MCF 10A (cell line): ENCODE measurements at regions of chr12 and their contacts with region 1.

Region 1: DNA sequence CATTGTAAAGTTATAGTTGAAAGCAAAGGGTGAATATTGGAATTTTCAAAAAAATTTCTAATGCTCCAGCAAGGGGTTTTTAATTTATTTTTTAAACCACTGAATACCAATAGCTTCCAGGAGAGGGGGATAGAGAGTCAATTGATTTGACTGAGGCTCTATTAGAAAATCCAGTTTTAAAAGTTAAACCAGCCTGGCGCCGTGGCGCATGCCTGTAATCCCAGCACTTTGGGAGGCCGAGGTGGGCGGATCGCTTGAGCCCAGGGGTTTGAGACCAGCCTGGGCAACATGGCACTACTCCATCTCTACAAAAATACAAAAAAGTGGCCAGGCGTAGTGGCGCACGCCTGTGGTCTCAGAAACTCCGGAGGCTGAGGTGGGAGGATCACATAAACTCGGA is 150.1 kb downstream of the SLC38A4 start:
- DNase-seq: peak; percentile 72
- H3K4me3 Mint-ChIP-seq: no peak overlapping the region
- H3K27ac Mint-ChIP-seq: peak overlapping the region; percentile 98
- H3K4me1 Mint-ChIP-seq: peaks cover 43% of the 10 kb centered on the region
- H3K27me3 Mint-ChIP-seq: no peaks in the 10 kb centered on the region
- CTCF ChIP-seq: peak; percentile 69

Region 2: GRCh38 chr12:45990468-45991283 is 685.1 kb before region 1 on chr12 and contains the start of gene SCAF11:
- CTCF ChIA-PET with region 1: interaction called, 5 read pairs
- POLR2A ChIA-PET with region 1: interaction called, 18 read pairs
- intact Hi-C with region 1: loop called (anchors 5 kb)
- DNase-seq: peak; percentile 99
- H3K4me3 Mint-ChIP-seq: peak within 1 kb of the TSS; percentile 91
- H3K27ac Mint-ChIP-seq: peak within 1 kb of the TSS; percentile 93
- H3K4me1 Mint-ChIP-seq: peaks cover 31% of the 10 kb centered on the region
- H3K27me3 Mint-ChIP-seq: no peaks in the 10 kb centered on the region
- CTCF ChIP-seq: peak; percentile 85
- total RNA-seq, gene SCAF11: 106 and 107 TPM in 2 replicates

Region 3: GRCh38 chr12:46160101-46160980 is 515.4 kb before region 1 on chr12:
- CTCF ChIA-PET with region 1: no interaction called
- POLR2A ChIA-PET with region 1: interaction called, 11 read pairs
- intact Hi-C with region 1: no loop called
- DNase-seq: peak; percentile 93
- H3K4me3 Mint-ChIP-seq: peak overlapping the region; percentile 51
- H3K27ac Mint-ChIP-seq: peak overlapping the region; percentile 77
- H3K4me1 Mint-ChIP-seq: peaks cover 18% of the 10 kb centered on the region
- H3K27me3 Mint-ChIP-seq: no peaks in the 10 kb centered on the region
- CTCF ChIP-seq: no peak

Region 4: DNA sequence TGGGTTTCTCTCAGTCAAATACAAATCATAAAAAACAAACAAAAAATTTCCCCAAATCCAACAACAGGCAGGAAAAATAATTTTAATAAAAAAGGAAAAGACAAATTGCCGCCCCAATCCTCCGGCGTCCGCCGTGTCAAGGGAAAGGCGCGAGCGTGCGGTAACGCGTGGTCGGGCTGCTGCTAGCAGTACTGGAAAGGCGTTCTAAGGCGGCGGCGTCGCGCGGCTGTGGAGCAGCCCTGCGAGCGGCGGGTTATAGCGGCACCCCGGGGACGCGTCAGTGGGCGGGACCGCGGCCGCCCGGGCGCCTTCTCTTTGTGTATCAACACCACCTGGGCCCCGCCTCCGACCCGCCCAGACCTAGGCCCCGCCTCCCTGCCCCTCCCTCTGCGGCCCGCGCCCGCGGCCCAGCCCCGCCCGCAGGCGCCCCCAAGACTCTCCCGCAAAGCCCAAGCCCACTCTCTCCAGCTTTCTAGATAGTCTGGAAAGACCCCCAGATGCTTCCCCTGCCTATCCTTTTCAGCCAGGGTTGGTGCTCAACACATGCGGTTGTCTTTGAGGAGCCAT is 303.1 kb before region 1 on chr12 and contains the start of gene SLC38A2:
- CTCF ChIA-PET with region 1: interaction called, 13 read pairs
- POLR2A ChIA-PET with region 1: interaction called, 497 read pairs
- intact Hi-C with region 1: loop called (anchors 1 kb)
- DNase-seq: peak; percentile 92
- H3K4me3 Mint-ChIP-seq: peak within 1 kb of the TSS; percentile 93
- H3K27ac Mint-ChIP-seq: peak within 1 kb of the TSS; percentile 98
- H3K4me1 Mint-ChIP-seq: peaks cover 12% of the 10 kb centered on the region
- H3K27me3 Mint-ChIP-seq: no peaks in the 10 kb centered on the region
- CTCF ChIP-seq: no peak
- total RNA-seq, gene SLC38A2: 817 and 1,070 TPM in 2 replicates

Region 5: DNA sequence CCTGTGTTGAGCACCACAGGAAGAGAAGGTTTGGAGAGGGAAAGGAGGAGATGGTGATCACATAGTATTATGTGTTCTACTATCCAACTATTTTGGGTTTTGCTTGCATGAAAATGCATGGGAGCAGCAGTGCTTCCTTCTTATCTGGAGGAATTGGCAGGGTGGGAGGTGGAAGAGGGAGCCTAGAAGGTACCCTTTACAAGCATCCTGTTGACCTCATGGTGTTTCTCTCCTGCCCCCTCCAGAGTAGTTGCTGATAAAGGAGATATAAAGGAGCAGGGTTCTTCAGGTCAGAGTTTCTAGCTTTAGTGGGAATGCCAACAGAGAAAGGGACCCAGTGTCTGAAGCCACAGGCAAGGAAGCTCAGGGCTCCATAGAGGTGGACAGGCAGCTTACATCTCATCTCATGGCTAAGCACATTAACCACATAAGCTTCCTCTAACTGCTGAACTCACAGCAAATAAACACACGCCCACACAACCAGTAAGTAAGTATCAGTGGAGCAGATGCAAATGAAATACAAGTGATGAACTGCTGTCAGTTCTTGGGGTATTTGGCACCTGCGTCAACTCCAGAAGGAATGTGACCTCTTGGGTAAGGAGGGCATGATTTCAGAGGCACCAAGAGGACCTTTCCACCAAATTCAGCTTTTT is 129.0 kb before region 1 on chr12:
- CTCF ChIA-PET with region 1: no interaction called
- POLR2A ChIA-PET with region 1: interaction called, 11 read pairs
- intact Hi-C with region 1: no loop called
- DNase-seq: no peak
- H3K4me3 Mint-ChIP-seq: no peak overlapping the region
- H3K27ac Mint-ChIP-seq: peak overlapping the region; percentile 98
- H3K4me1 Mint-ChIP-seq: peaks cover 55% of the 10 kb centered on the region
- H3K27me3 Mint-ChIP-seq: no peaks in the 10 kb centered on the region
- CTCF ChIP-seq: no peak

Region 6: DNA sequence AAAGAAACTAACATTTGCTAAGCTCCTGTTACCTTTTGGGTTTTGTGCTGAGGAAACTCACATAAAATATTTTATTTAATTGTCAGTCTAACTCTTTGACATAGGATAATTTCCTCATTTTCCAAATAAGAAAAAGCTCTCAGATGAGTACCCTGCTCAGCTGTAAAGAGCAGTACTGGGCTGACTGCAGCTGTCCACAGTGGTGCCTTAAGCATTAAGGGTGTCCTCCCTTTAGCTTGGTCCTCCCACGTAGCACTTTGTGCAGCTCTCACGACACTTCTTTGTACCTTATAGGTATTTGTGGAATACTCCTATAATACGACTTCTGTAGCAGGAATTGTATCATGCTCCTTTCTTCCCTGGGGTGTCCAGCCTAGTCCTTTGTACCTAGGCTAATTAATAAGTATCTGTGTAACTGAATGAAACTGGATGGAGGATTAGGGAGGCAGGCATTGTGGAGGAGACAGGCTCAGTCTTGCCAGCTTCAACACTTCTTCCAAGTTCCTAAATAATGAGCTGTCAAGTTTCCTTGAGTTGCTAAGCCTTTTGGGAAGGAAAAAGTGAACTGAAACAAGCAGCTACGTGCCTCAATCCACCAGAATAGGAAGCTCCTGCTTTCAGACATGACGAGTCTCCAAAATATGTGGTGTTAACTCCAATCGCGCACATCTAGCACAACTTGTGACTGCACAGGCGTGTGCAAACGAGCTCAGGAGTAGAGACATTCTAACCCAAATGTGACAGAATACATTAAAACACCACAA is 27.0 kb after region 1 on chr12:
- CTCF ChIA-PET with region 1: interaction called, 7 read pairs
- POLR2A ChIA-PET with region 1: interaction called, 86 read pairs
- intact Hi-C with region 1: no loop called
- DNase-seq: peak; percentile 94
- H3K4me3 Mint-ChIP-seq: peak overlapping the region; percentile 64
- H3K27ac Mint-ChIP-seq: peak overlapping the region; percentile 93
- H3K4me1 Mint-ChIP-seq: peaks cover 30% of the 10 kb centered on the region
- H3K27me3 Mint-ChIP-seq: no peaks in the 10 kb centered on the region
- CTCF ChIP-seq: no peak

Region 7: DNA sequence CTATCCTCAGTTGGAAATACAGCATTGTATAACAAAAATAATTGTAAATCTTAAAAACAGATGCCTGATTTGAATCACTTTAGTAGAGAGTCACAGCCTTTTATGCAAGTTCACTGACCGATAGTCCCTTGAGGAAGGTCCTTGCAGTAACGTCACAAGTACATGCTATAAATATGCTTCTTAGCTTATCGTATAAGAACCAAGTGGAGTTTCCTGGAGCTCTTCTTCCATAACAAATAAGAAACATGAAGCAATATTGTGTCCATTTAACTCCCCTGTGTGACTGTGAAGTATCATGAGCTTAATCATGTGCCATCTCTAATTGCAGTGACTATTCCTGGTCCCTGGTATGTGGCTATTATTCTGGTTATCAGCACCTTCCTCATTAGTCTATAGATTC is 42.1 kb after region 1 on chr12:
- CTCF ChIA-PET with region 1: no interaction called
- POLR2A ChIA-PET with region 1: no interaction called
- intact Hi-C with region 1: no loop called
- DNase-seq: no peak
- H3K4me3 Mint-ChIP-seq: no peak overlapping the region
- H3K27ac Mint-ChIP-seq: no peak overlapping the region
- H3K4me1 Mint-ChIP-seq: no peaks in the 10 kb centered on the region
- H3K27me3 Mint-ChIP-seq: no peaks in the 10 kb centered on the region
- CTCF ChIP-seq: no peak